ENCODE measurements at regions of chr5 and their contacts with region 1.

Region 1: GRCh38 chr5:39177631-39177964 is 41.8 kb downstream of the FYB1 start:
- DNase-seq: peak; percentile 60
- H3K4me3 Mint-ChIP-seq: peak overlapping the region; percentile 71
- H3K27ac Mint-ChIP-seq: peak overlapping the region; percentile 93
- H3K4me1 Mint-ChIP-seq: peaks cover 97% of the 10 kb centered on the region
- H3K27me3 Mint-ChIP-seq: no peaks in the 10 kb centered on the region

Region 2: DNA sequence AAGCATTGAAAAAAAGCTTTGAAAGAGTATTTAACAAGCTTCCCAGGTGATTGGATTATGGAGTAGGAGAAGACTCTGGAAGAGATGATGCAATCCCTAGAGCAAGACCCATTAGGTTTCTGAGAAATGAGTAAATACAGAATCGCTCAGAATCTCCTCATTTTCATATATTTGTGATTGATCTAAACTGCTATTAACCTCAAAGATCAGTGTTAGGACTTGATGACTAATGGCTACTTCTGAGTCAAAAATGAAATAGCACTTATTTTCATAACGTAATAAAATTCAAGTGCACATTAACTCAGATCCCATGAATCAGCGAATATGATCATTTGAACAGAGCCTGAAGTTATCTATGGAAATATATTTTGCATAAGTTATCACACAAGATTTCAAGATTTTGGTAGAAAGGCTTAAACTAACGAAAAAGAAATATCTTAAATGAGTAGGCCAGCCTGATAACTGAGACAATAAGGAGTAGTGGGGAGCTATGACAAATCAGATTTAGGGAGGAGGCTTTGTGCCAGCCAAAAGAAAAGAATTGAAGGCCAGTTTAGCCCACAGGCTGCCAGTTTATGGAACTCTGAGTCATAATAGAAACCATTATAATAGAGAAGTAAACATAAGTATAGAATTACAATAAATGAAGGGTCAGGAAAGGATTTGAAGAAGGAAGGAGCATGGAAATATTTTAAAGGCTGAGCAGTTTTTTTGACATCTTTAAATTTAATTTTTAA is 438.4 kb before region 1 on chr5:
- CTCF ChIA-PET with region 1: no interaction called
- POLR2A ChIA-PET with region 1: no interaction called
- DNase-seq: no peak
- H3K4me3 Mint-ChIP-seq: no peak overlapping the region
- H3K27ac Mint-ChIP-seq: no peak overlapping the region
- H3K4me1 Mint-ChIP-seq: no peaks in the 10 kb centered on the region
- H3K27me3 Mint-ChIP-seq: peaks cover 3% of the 10 kb centered on the region

Region 3: GRCh38 chr5:39132128-39132447 is 45.5 kb before region 1 on chr5:
- CTCF ChIA-PET with region 1: no interaction called
- POLR2A ChIA-PET with region 1: no interaction called
- DNase-seq: no peak
- H3K4me3 Mint-ChIP-seq: no peak overlapping the region
- H3K27ac Mint-ChIP-seq: no peak overlapping the region
- H3K4me1 Mint-ChIP-seq: peaks cover 24% of the 10 kb centered on the region
- H3K27me3 Mint-ChIP-seq: no peaks in the 10 kb centered on the region

Region 4: GRCh38 chr5:39164529-39165402 is 12.8 kb before region 1 on chr5:
- CTCF ChIA-PET with region 1: interaction called, 13 read pairs
- POLR2A ChIA-PET with region 1: no interaction called
- DNase-seq: no peak
- H3K4me3 Mint-ChIP-seq: peak overlapping the region; percentile 61
- H3K27ac Mint-ChIP-seq: peak overlapping the region; percentile 89
- H3K4me1 Mint-ChIP-seq: peaks cover 88% of the 10 kb centered on the region
- H3K27me3 Mint-ChIP-seq: no peaks in the 10 kb centered on the region

Region 5: DNA sequence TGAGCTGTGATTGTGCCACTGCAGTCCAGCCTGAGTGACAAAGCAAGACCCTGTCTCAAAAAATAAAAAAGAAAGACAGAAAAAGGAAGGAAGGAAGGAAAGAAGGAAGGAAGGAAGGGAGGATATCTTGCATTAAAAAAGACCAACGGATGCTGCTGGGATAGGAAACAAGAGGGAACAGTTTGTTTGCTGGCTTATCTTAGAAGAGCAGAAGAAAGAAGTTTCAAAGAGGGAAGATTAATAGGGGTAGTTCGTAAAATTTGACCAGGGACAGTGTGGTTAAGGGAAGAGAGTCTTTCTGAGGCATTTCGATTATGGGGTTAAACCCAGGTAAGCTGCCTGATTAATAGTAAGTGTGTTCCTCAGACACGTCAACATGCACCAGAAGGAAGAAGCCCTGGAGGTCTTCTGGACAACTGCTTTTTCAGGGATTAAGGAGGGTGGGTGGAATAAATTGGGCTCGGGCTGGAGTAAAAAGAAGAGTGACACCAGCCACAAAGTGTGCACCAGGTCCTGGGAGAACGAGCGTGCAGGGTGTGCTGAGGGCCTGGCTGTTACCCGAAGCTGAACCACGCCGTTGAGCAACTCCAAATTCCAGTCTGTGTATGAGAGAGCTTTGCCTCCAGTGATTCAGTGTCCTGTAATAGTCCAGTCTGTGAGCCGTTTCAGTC is 17.0 kb after region 1 on chr5:
- CTCF ChIA-PET with region 1: interaction called, 17 read pairs
- POLR2A ChIA-PET with region 1: no interaction called
- DNase-seq: no peak
- H3K4me3 Mint-ChIP-seq: peak overlapping the region; percentile 81
- H3K27ac Mint-ChIP-seq: peak overlapping the region; percentile 84
- H3K4me1 Mint-ChIP-seq: peaks cover 73% of the 10 kb centered on the region
- H3K27me3 Mint-ChIP-seq: no peaks in the 10 kb centered on the region

Measured in activated CD4-positive, alpha-beta T cell treated with anti-CD3 and anti-CD28 coated beads, Interleukin-2, amount 10 ng/mL, durations not matched to agents 7 days and 5 days (primary cell).